Posterior cingulate gyrus (tissue), 11 donors: ENCODE measurements at regions of chr15 and their contacts with region 1.

Region 1: GRCh38 chr15:31128919-31129768 is 27.6 kb upstream of the TRPM1 start:
- DNase-seq: peak; percentile 68 to 96 (median 86)

Region 2: DNA sequence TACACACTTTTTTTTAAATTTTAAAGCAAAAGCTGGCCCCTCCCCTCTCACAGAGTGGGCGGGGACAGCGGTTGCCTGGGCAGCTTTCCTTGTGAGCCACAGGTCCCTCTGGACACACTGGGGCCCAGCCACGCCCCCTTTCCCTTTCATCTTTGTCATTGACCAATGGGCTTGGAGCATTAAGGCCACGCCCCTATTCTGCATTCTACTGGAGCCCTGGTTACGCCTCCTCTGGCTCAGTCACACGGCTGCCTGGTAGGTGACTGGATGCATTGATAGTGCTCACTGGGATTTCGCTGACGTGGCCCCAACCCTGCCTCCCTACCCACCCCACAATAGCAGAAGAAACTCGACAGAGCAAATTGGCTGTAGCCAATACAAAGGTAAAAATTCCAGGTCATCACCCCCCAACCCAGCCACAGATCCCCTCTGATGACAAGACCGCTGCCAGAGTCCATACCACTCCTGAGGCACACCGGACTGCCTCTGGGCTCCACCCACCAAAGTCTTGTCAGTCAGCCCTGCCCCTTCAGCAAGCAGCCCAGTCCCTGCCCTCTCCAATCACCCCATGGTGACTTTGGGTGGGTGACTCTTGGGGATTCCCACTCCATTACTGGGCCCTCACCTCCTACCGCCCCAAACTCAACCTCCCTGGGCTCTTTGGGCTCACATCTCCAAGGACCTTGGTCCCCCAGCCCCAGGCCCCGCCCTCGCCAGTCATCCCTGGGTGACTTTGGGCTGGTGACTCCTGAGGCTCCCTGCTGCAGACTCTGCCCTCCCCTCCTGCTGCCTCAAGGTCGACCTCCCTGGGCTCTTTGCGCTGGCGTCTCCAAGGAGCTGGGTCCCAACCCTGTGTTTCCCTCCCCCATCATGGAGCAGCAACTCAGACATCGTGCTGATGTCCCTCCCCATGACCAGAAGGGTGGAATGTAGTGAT is 337.6 kb before region 1 on chr15:
- intact Hi-C with region 1: loop called (anchors 10 kb)
- DNase-seq: peak in 1 of 10 donors; percentile 76

Region 3: GRCh38 chr15:30872341-30872748 is 256.8 kb before region 1 on chr15:
- intact Hi-C with region 1: loop called (anchors 10 kb)
- DNase-seq: no peak

Region 4: DNA sequence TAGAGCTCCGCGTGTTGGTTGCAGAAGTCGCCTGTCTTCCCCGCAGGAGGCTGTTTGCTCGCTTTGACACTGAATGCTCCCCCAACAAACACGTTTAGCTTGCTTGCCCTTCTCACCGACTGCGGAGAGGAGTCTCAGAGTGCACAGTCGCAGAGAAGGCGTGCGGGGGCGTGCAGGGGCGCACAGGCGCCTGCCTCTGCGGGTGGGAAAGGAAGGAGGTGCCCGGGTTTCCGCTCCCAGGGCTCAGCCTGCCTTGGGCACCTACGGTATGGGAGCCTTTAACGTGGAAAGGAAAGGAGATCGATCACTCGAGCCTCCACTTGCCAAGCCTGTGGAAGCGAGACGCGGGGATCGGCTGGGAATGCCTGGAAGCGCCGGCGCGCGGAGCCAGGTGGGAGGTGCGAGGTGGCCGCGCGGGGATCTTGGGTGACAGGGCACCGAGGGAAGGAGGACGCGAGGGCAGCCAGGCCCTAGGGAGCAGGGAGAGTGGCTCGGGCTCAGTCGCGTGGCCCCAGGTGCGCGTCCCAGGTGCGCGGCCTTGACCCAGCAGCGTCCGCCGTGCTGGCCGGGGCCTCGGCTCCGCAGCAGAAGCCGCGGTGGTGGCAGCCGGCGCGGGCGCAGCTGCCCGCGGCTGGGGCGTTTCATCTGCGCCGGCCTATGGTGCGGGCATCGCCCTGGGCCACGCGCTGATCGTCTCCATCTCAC is 225.5 kb before region 1 on chr15 and contains the start of gene FAN1:
- intact Hi-C with region 1: loop called (anchors 10 kb)
- DNase-seq: peak; percentile 85 to 99 (median 92)

Region 5: GRCh38 chr15:30940359-30940758 is 188.8 kb before region 1 on chr15:
- intact Hi-C with region 1: loop called (anchors 10 kb)
- DNase-seq: no peak

Region 6: GRCh38 chr15:31163746-31164563 is 34.8 kb after region 1 on chr15:
- intact Hi-C with region 1: no loop called
- DNase-seq: no peak